Naive thymus-derived CD4-positive, alpha-beta T cell (primary cell): ENCODE measurements at regions of chr13 and their contacts with region 1.

Region 1: DNA sequence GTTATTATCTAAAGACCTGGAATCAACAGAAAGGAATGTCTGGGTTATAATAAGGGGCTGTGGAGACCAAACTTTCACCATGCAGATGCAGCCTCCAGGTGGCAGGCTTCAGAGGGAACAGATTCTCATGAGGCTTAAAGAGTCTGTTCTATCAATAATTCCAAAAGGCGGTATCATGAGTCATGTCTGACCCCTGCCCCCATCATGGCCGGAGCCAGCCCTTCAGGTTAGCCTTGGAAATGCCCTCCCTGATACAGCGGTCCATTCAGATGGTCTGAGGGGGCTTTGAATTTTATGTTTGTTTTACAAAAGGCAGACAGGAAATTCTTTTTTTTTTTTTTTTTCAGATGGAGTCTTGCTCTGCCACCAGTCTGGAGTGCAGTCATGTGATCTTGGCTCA is 21.7 kb upstream of the LAMP1 start:
- DNase-seq: peak in 7 of 9 donors; percentile 22 to 55 (median 51)
- ATAC-seq: peak; percentile 56
- H3K4me3 ChIP-seq: no peak overlapping the region
- H3K4me3 Mint-ChIP-seq: peak overlapping the region in 6 of 10 donors; percentile 33 to 65 (median 56)
- H3K27ac ChIP-seq: no peak overlapping the region
- H3K27ac Mint-ChIP-seq: peak overlapping the region in 3 of 9 donors; percentile 19 to 55 (median 45)
- H3K4me1 ChIP-seq: no peaks in the 10 kb centered on the region
- H3K4me1 Mint-ChIP-seq: peaks cover 6 to 18% (median 11%) of the 10 kb centered on the region in 7 donors
- H3K27me3 ChIP-seq: no peaks in the 10 kb centered on the region
- H3K27me3 Mint-ChIP-seq: peaks cover 0 to 18% (median 8%) of the 10 kb centered on the region in 5 donors

Region 2: DNA sequence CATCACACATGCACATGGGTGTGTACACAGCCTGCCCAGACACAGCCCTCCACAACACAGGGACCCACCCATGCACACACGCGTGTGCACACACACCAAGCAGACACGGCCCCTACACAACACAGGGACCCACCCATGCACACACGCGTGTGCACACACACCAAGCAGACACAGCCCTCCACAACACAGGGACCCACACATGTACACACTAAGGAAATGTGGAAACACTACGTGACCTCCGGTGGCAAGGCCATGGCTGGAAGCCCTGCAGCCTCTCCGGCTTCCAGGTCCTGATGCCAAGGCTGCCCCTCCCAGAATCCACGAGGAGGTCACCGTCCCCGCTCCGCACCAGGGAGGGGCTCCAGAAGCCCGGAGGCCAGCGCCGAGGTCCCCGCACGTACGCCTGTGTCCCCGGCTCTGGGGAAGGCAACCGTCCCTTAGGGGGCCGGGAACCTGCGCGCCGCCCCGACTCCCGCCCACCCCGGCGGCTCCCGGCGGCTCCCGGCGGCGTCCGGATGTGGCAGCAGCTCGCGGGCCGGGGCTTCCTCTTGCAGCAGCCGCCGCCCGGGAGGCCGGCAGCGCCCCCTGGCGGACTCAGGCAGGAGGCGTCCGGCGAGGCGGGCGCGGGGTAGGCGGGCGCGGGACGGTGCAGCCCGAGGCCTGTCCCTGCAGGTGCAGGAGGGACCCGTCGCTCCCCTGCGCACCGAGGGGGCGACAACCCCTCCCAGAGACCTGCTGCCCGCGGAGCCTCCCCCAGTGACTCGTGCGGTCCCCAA is 118.4 kb after region 1 on chr13:
- CTCF ChIA-PET with region 1: interaction called, 6 read pairs
- POLR2A ChIA-PET with region 1: no interaction called
- intact Hi-C with region 1: loop called (anchors 1 kb)
- DNase-seq: peak; percentile 75 to 91 (median 86)
- ATAC-seq: peak; percentile 99
- H3K4me3 ChIP-seq: peak overlapping the region; percentile 79
- H3K4me3 Mint-ChIP-seq: peak overlapping the region; percentile 84 to 97 (median 90)
- H3K27ac ChIP-seq: peak overlapping the region; percentile 74
- H3K27ac Mint-ChIP-seq: peak overlapping the region in 8 of 9 donors; percentile 29 to 89 (median 72)
- H3K4me1 ChIP-seq: peaks cover 0 to 7% of the 10 kb centered on the region in 2 donors
- H3K4me1 Mint-ChIP-seq: peaks cover 4 to 9% (median 5%) of the 10 kb centered on the region in 7 donors
- H3K27me3 ChIP-seq: no peaks in the 10 kb centered on the region
- H3K27me3 Mint-ChIP-seq: peaks cover 0 to 4% (median 0%) of the 10 kb centered on the region in 5 donors

Region 3: GRCh38 chr13:113410472-113411201 is 135.2 kb after region 1 on chr13:
- CTCF ChIA-PET with region 1: no interaction called
- POLR2A ChIA-PET with region 1: no interaction called
- intact Hi-C with region 1: no loop called
- DNase-seq: no peak
- ATAC-seq: no peak
- H3K4me3 ChIP-seq: no peak overlapping the region
- H3K4me3 Mint-ChIP-seq: peak overlapping the region in 1 of 10 donors; percentile 18
- H3K27ac ChIP-seq: no peak overlapping the region
- H3K27ac Mint-ChIP-seq: no peak overlapping the region
- H3K4me1 ChIP-seq: no peaks in the 10 kb centered on the region
- H3K4me1 Mint-ChIP-seq: no peaks in the 10 kb centered on the region
- H3K27me3 ChIP-seq: no peaks in the 10 kb centered on the region
- H3K27me3 Mint-ChIP-seq: peaks cover 0 to 12% (median 5%) of the 10 kb centered on the region in 5 donors